ENCODE measurements at regions of chr3 and their contacts with region 1.

Region 1: GRCh38 chr3:154252759-154253638 is 71.3 kb downstream of the DHX36 start:
- DNase-seq: peak; percentile 84
- ATAC-seq: peak; percentile 99
- H3K4me3 ChIP-seq: no peak overlapping the region
- H3K27ac ChIP-seq: no peak overlapping the region
- H3K4me1 ChIP-seq: no peaks in the 10 kb centered on the region
- H3K27me3 ChIP-seq: no peaks in the 10 kb centered on the region
- CTCF ChIP-seq: peak; percentile 99
- POLR2A ChIP-seq: peak; percentile 49; the same call in 1 of the 2 replicates
- RAD21 ChIP-seq: peak; percentile 97

Region 2: GRCh38 chr3:153835540-153835939 is 417.5 kb before region 1 on chr3:
- CTCF ChIA-PET with region 1: no interaction called
- POLR2A ChIA-PET with region 1: interaction called, 14 read pairs
- dilution Hi-C with region 1: no loop called
- in situ Hi-C with region 1: no loop called
- intact Hi-C with region 1: no loop called
- DNase-seq: no peak
- ATAC-seq: no peak
- H3K4me3 ChIP-seq: no peak overlapping the region
- H3K27ac ChIP-seq: no peak overlapping the region
- H3K4me1 ChIP-seq: no peaks in the 10 kb centered on the region
- H3K27me3 ChIP-seq: no peaks in the 10 kb centered on the region
- CTCF ChIP-seq: no peak
- POLR2A ChIP-seq: no peak
- RAD21 ChIP-seq: no peak

Region 3: DNA sequence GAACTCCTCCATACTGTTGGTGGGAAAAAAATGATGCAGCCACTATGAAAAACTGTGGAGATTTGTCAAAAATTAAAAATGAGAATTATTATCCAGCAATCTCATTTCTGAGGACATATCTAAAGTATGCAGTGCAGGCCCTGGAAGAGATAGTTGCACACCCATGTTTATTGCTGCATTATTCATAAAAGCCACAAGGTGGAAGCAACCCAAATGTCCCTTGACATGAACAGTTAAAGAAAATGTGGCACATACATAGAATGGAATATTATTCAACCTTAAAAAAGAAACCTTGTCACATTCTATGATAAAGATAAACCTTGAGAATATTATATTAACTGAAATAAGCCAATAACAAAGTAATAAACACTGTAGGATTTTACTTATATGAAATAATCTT is 212.7 kb before region 1 on chr3:
- CTCF ChIA-PET with region 1: no interaction called
- POLR2A ChIA-PET with region 1: no interaction called
- dilution Hi-C with region 1: no loop called
- in situ Hi-C with region 1: no loop called
- intact Hi-C with region 1: loop called (anchors 1 kb)
- DNase-seq: peak; percentile 7
- ATAC-seq: peak; percentile 70
- H3K4me3 ChIP-seq: no peak overlapping the region
- H3K27ac ChIP-seq: no peak overlapping the region
- H3K4me1 ChIP-seq: no peaks in the 10 kb centered on the region
- H3K27me3 ChIP-seq: no peaks in the 10 kb centered on the region
- CTCF ChIP-seq: peak; percentile 32
- POLR2A ChIP-seq: no peak
- RAD21 ChIP-seq: no peak

Region 4: GRCh38 chr3:154095832-154096421 is 157.1 kb before region 1 on chr3:
- CTCF ChIA-PET with region 1: interaction called, 9 read pairs
- POLR2A ChIA-PET with region 1: no interaction called
- dilution Hi-C with region 1: no loop called
- in situ Hi-C with region 1: loop called (anchors 5 kb)
- intact Hi-C with region 1: loop called (anchors 1 kb)
- DNase-seq: peak; percentile 55
- ATAC-seq: peak; percentile 72
- H3K4me3 ChIP-seq: no peak overlapping the region
- H3K27ac ChIP-seq: no peak overlapping the region
- H3K4me1 ChIP-seq: no peaks in the 10 kb centered on the region
- H3K27me3 ChIP-seq: 0 out of 2 replicates have a peak, but pooled peaks cover 2% of the 10 kb centered on the region
- CTCF ChIP-seq: peak; percentile 67
- POLR2A ChIP-seq: no peak
- RAD21 ChIP-seq: peak; percentile 70

Region 5: DNA sequence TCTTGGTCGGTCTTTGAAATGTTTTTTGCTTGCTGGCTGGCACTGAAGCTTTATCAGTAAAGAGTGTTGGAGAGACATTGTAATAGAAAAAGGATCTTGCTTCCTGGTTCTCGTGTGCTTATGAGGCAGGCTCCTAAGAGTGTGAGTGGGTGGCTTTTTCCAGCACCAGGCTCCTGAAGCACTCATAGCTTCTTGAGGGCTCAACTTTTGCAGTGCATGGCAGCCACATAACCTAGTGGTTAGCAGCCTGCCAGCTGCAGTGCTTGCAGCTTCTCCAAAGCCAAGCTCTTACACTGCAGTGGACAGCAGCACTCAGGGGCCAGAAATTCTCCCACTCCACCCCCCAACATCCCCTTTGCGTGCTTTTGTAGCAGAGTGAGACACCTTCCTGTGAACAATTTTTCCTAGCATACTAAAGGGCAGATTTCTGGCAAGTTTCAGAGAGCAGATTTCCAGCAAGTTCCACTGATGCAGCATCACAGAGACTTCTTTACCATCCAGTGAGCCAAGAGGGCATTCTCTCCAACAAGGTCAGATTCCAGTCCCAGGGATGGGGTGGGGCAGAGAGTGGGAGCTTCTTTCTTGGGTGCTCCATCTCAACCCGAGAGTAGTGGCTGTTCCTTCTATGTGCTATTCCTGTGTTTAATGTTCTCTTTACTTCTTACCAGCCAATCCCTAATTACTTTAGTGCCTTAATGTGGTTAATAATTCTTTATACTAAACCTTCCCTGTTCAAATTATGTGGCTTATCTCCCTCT is 147.6 kb before region 1 on chr3:
- CTCF ChIA-PET with region 1: interaction called, 11 read pairs
- POLR2A ChIA-PET with region 1: no interaction called
- dilution Hi-C with region 1: no loop called
- in situ Hi-C with region 1: no loop called
- intact Hi-C with region 1: no loop called
- DNase-seq: peak; percentile 3
- ATAC-seq: no peak
- H3K4me3 ChIP-seq: no peak overlapping the region
- H3K27ac ChIP-seq: no peak overlapping the region
- H3K4me1 ChIP-seq: no peaks in the 10 kb centered on the region
- H3K27me3 ChIP-seq: no peaks in the 10 kb centered on the region
- CTCF ChIP-seq: no peak
- POLR2A ChIP-seq: no peak
- RAD21 ChIP-seq: no peak

Region 6: DNA sequence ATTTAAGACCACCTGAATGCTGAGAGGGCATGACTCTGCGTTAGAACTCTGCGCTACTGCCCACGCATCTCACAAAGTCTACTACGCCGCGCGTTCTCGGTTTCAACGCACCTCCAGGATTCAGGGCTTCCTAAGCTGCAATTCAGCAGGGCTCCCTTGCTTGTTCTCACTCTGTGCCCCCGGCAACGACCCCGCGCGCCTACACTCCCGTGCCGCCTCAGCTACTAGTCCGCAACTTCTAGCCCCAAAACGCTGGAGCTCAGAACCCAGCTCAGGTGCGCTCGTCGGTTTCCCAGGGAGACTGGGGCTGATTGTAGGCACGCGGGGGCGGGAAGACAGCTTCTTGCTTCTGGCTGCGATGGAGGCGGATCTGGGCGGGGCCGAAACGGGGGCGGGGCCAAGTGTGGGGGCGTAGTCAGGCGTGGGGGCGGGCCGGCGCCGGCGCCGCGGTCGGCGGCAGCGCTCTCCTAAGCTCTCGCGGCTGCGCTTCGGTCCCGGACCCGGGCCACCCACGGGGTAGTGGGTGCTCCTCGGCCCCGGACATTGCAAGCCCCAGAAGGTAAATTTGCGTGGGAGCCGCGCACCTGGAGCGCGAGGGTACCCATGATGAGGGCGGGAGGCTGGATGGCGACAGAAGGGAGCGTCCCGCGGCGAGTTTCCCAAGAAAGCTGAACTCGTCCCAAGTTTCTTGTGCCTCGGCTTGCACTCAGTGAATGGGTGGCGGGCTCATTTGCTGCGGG is 131.9 kb before region 1 on chr3 and contains the start of gene ARHGEF26:
- CTCF ChIA-PET with region 1: interaction called, 6 read pairs
- POLR2A ChIA-PET with region 1: no interaction called
- dilution Hi-C with region 1: no loop called
- in situ Hi-C with region 1: no loop called
- intact Hi-C with region 1: loop called (anchors 1 kb)
- DNase-seq: peak; percentile 56
- ATAC-seq: peak; percentile 93
- H3K4me3 ChIP-seq: peak within 1 kb of the TSS; percentile 73
- H3K27ac ChIP-seq: no peak within 1 kb of the TSS; the same call in 1 of the 2 replicates
- H3K4me1 ChIP-seq: no peaks in the 10 kb centered on the region; the same call in 1 of the 2 replicates
- H3K27me3 ChIP-seq: no peaks in the 10 kb centered on the region; the same call in 1 of the 2 replicates
- CTCF ChIP-seq: no peak
- POLR2A ChIP-seq: no peak
- RAD21 ChIP-seq: no peak
- total RNA-seq, gene ARHGEF26: 2.0 and 3.1 TPM in 2 replicates

Measured in IMR-90 (cell line).